Activated CD4-positive, alpha-beta T cell treated with anti-CD3 and anti-CD28 coated beads for 36 hours (primary cell): ENCODE measurements at regions of chr1 and their contacts with region 1.

Region 1: GRCh38 chr1:151435160-151435559 is 24.1 kb downstream of the POGZ start:
- DNase-seq: no peak
- ATAC-seq: no peak
- H3K4me3 Mint-ChIP-seq: no peak overlapping the region
- H3K27ac Mint-ChIP-seq: no peak overlapping the region
- H3K4me1 Mint-ChIP-seq: peaks cover 41% of the 10 kb centered on the region
- H3K27me3 Mint-ChIP-seq: no peaks in the 10 kb centered on the region

Region 2: GRCh38 chr1:151327223-151327902 is 107.8 kb before region 1 on chr1 and contains the start of gene PI4KB:
- CTCF ChIA-PET with region 1: no interaction called
- POLR2A ChIA-PET with region 1: no interaction called
- intact Hi-C with region 1: no loop called
- DNase-seq: peak; percentile 92
- ATAC-seq: peak; percentile 94
- H3K4me3 Mint-ChIP-seq: peak within 1 kb of the TSS; percentile 92
- H3K27ac Mint-ChIP-seq: peak within 1 kb of the TSS; percentile 95
- H3K4me1 Mint-ChIP-seq: peaks cover 30% of the 10 kb centered on the region
- H3K27me3 Mint-ChIP-seq: no peaks in the 10 kb centered on the region
- total RNA-seq, gene PI4KB: 53.0 to 54.5 TPM

Region 3: DNA sequence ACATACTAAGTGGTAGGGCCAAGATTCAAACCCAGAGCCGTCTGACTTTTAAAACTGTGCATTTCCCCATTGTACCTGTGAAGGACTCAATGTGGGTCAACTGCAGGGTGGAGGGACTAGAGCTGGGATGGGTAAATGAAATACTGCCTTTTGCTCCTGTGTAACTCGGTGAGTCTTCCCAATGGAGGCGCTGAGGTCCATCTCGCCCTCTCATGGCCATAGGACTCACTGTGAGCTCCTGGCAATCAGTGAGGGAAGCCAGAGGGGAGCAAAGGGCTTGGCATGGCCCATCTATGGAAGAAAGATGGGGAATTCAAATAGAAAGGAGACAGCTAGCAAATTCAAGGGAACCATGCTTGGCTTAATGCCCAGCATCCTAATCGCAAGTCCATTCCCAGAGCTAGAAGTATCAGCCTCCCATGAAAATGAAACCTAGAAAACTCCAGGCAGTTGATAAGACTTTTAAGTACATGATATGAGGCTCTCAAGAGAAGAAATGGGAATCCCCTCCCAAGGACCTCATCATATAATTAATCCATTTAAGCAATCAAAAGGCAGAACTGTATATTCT is 50.6 kb after region 1 on chr1:
- CTCF ChIA-PET with region 1: no interaction called
- POLR2A ChIA-PET with region 1: no interaction called
- intact Hi-C with region 1: loop called in 1 of 2 experiments (anchors 1 kb)
- DNase-seq: no peak
- ATAC-seq: no peak
- H3K4me3 Mint-ChIP-seq: no peak overlapping the region
- H3K27ac Mint-ChIP-seq: no peak overlapping the region
- H3K4me1 Mint-ChIP-seq: no peaks in the 10 kb centered on the region
- H3K27me3 Mint-ChIP-seq: no peaks in the 10 kb centered on the region